ENCODE measurements at regions of chr6 and their contacts with region 1.

Region 1: GRCh38 chr6:42028234-42029061 is 21.9 kb upstream of the TAF8 start:
- DNase-seq: no peak
- H3K4me3 ChIP-seq: no peak overlapping the region
- H3K27ac ChIP-seq: no peak overlapping the region
- H3K4me1 ChIP-seq: peaks cover 14% of the 10 kb centered on the region
- H3K27me3 ChIP-seq: no peaks in the 10 kb centered on the region
- CTCF ChIP-seq: no peak

Region 2: GRCh38 chr6:41591859-41592502 is 436.5 kb before region 1 on chr6:
- CTCF ChIA-PET with region 1: interaction called, 16 read pairs
- POLR2A ChIA-PET with region 1: no interaction called
- intact Hi-C with region 1: no loop called
- DNase-seq: peak; percentile 53 to 71
- H3K4me3 ChIP-seq: no peak overlapping the region
- H3K27ac ChIP-seq: no peak overlapping the region
- H3K4me1 ChIP-seq: no peaks in the 10 kb centered on the region
- H3K27me3 ChIP-seq: no peaks in the 10 kb centered on the region
- CTCF ChIP-seq: peak; percentile 95

Region 3: DNA sequence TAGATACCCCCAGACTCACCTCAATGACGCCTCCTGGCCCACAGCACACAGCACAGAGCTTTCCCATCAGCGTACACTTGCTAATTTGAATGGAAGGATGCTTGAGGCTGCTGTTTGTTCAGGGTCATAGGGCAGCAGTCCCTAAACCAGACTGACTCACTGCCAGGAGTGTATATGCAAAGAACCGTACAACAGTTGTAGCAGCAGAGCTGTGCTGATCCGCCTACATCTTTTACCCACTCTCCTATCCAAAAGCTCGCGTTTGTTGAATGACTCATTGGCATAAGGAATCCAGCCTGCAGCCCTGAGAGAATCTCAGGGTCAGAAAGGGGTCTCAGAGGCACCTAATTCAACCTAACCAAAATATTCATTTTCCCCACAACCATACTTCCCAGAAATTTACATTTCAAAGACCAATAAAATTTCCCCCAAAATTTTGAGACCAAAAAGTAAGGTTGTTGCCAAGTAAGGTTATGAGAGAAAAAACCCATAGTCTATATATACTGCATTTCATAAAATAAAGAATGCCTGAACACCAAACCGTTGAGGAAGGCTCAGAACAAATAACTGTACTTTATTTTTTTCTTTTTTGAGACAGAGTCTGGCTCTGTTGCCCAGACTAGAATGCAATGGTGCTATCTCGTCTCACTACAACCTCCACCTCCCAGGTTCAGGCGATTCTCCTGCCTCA is 51.5 kb before region 1 on chr6:
- CTCF ChIA-PET with region 1: interaction called, 10 read pairs
- POLR2A ChIA-PET with region 1: interaction called, 4 read pairs
- intact Hi-C with region 1: no loop called
- DNase-seq: peak in 1 of 2 experiments; percentile 77
- H3K4me3 ChIP-seq: no peak overlapping the region
- H3K27ac ChIP-seq: 0 out of 2 replicates have a peak overlapping the region, but pooled peaks have one; percentile 15
- H3K4me1 ChIP-seq: peaks cover 13% of the 10 kb centered on the region
- H3K27me3 ChIP-seq: no peaks in the 10 kb centered on the region
- CTCF ChIP-seq: no peak

Region 4: DNA sequence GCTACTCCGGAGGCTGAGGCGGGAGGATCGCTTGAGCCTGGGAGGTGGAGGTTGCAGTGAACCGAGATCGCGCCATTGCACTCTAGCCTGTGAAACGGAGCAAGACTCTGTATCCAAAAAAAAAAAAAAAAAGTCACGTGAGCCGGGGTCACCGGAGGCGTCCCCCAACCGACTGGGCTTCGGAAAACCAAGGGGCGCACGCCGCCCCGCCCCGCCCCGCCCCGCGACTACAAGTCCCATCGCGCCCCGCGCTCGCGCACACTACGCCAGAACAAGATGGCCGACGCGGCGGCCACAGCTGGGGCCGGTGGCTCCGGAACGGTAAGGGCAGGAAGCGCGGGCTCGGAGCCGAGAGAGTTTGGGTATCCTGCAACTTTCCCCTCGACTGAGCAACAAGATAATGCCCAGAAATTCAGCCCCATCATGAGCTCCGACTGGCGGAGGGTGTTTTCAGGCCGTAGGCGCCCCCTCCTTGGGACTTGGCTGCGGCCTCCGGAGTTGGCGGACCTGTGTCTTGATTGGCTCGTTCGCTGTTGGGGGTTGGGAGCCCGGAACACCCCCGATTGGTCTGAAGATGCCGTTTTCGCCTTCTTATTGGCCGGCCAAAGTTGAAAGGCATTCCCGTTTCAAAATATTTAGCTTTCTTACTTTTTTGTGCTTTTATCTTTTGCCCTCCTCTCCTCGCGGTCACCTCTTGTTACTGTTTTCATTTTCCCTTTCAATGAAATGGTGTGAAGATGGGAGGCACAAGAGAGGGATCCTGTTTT is 22.0 kb after region 1 on chr6 and contains the start of gene TAF8:
- CTCF ChIA-PET with region 1: no interaction called
- POLR2A ChIA-PET with region 1: interaction called, 14 read pairs
- intact Hi-C with region 1: no loop called
- DNase-seq: peak; percentile 83 to 90
- H3K4me3 ChIP-seq: peak within 1 kb of the TSS; percentile 91
- H3K27ac ChIP-seq: peak within 1 kb of the TSS; percentile 68
- H3K4me1 ChIP-seq: peaks cover 36% of the 10 kb centered on the region
- H3K27me3 ChIP-seq: no peaks in the 10 kb centered on the region
- CTCF ChIP-seq: no peak
- total RNA-seq, gene TAF8: 35.6 and 38.4 TPM in 2 replicates

Region 5: DNA sequence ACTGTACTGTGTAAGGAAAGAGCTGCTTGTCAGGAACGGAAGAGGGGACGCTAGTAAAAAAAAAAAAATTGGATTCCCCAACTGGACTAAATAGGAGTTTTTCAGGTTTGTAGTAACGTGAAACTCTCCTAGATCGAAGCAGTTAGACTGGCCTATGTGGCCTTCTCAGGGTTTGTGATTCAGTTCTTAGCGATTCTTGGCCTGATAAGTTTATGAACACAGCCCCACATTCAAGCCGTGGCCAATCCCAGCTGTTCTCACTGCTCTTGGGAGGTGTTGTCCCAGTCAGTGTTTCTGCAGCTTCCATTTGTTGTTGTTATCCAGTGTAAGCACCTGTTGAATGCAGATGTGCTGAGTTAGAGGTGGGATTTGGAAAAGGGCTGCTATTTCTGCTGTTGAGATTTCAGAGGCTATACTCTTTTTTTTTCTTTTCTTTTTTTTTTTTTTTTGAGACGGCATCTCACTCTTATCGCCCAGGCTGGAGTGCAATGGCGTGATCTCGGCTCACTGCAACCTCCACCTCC is 51.6 kb after region 1 on chr6:
- CTCF ChIA-PET with region 1: no interaction called
- POLR2A ChIA-PET with region 1: no interaction called
- intact Hi-C with region 1: no loop called
- DNase-seq: peak in 1 of 2 experiments; percentile 80
- H3K4me3 ChIP-seq: no peak overlapping the region
- H3K27ac ChIP-seq: 0 out of 2 replicates have a peak overlapping the region, but pooled peaks have one; percentile 27
- H3K4me1 ChIP-seq: 0 out of 2 replicates have a peak, but pooled peaks cover 4% of the 10 kb centered on the region
- H3K27me3 ChIP-seq: no peaks in the 10 kb centered on the region
- CTCF ChIP-seq: no peak

Region 6: GRCh38 chr6:42563697-42564505 is 535.5 kb after region 1 on chr6 and contains the start of gene UBR2:
- CTCF ChIA-PET with region 1: no interaction called
- POLR2A ChIA-PET with region 1: interaction called, 31 read pairs
- intact Hi-C with region 1: no loop called
- DNase-seq: peak; percentile 94 to 97
- H3K4me3 ChIP-seq: peak within 1 kb of the TSS; percentile 65
- H3K27ac ChIP-seq: peak within 1 kb of the TSS; percentile 76
- H3K4me1 ChIP-seq: peaks cover 16% of the 10 kb centered on the region
- H3K27me3 ChIP-seq: no peaks in the 10 kb centered on the region
- CTCF ChIP-seq: peak; percentile 65
- total RNA-seq, gene UBR2: 20.5 and 21.1 TPM in 2 replicates